BJ (cell line): ENCODE measurements at regions of chr5 and their contacts with region 1.

Region 1: GRCh38 chr5:160390787-160391696 is 8.8 kb downstream of the FAM200C start:
- DNase-seq: no peak
- H3K4me3 ChIP-seq: no peak overlapping the region
- H3K27me3 ChIP-seq: no peaks in the 10 kb centered on the region
- CTCF ChIP-seq: peak; percentile 51

Region 2: GRCh38 chr5:160021831-160022446 is 369.1 kb before region 1 on chr5:
- CTCF ChIA-PET with region 1: interaction called, 26 read pairs
- POLR2A ChIA-PET with region 1: no interaction called
- DNase-seq: no peak
- H3K4me3 ChIP-seq: no peak overlapping the region
- H3K27me3 ChIP-seq: no peaks in the 10 kb centered on the region
- CTCF ChIP-seq: peak; percentile 69

Region 3: GRCh38 chr5:160379511-160379910 is 11.5 kb before region 1 on chr5:
- CTCF ChIA-PET with region 1: interaction called, 20 read pairs
- POLR2A ChIA-PET with region 1: interaction called, 5 read pairs
- DNase-seq: no peak
- H3K4me3 ChIP-seq: no peak overlapping the region
- H3K27me3 ChIP-seq: peaks cover 2% of the 10 kb centered on the region
- CTCF ChIP-seq: no peak